ENCODE measurements at regions of chr1 and their contacts with region 1.

Region 1: GRCh38 chr1:17451731-17452130 is 12.3 kb upstream of the RCC2 start:
- DNase-seq: no peak
- ATAC-seq: no peak
- H3K4me3 ChIP-seq: no peak overlapping the region
- H3K4me3 Mint-ChIP-seq: no peak overlapping the region
- H3K27ac ChIP-seq: no peak overlapping the region
- H3K27ac Mint-ChIP-seq: no peak overlapping the region
- H3K4me1 ChIP-seq: no peaks in the 10 kb centered on the region
- H3K4me1 Mint-ChIP-seq: no peaks in the 10 kb centered on the region
- H3K27me3 ChIP-seq: no peaks in the 10 kb centered on the region
- H3K27me3 Mint-ChIP-seq: peaks cover 4% of the 10 kb centered on the region
- CTCF ChIP-seq: no peak

Region 2: GRCh38 chr1:16727190-16728111 is 724.3 kb before region 1 on chr1:
- CTCF ChIA-PET with region 1: no interaction called
- POLR2A ChIA-PET with region 1: no interaction called
- intact Hi-C with region 1: loop called in 1 of 2 experiments (anchors 10 kb)
- DNase-seq: peak in 8 of 14 experiments; percentile 12 to 64 (median 40)
- ATAC-seq: peak; percentile 44
- H3K4me3 ChIP-seq: peak overlapping the region; percentile 2
- H3K4me3 Mint-ChIP-seq: no peak overlapping the region
- H3K27ac ChIP-seq: no peak overlapping the region
- H3K27ac Mint-ChIP-seq: no peak overlapping the region
- H3K4me1 ChIP-seq: peaks cover 11% of the 10 kb centered on the region
- H3K4me1 Mint-ChIP-seq: no peaks in the 10 kb centered on the region
- H3K27me3 ChIP-seq: peaks cover 5 to 12% of the 10 kb centered on the region in 2 experiments
- H3K27me3 Mint-ChIP-seq: no peaks in the 10 kb centered on the region
- CTCF ChIP-seq: no peak

Region 3: DNA sequence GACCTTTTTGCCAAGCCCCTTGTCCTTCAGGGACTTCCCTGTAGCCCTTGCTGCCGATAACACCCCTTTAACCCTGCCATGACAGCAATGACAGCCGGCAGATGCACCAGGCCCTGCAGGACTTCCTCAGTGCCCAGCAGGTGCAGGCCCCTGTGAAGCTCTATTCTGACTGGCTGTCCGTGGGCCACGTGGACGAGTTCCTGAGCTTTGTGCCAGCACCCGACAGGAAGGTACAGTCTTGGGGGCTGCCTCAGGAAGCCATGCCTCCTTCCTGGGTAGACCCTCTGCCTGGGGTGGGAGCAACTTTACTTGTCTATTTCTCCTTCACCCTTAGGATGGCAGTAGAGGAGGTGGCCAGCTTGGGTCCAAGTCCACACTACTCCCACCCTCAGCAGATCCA is 95.8 kb before region 1 on chr1:
- CTCF ChIA-PET with region 1: no interaction called
- POLR2A ChIA-PET with region 1: no interaction called
- intact Hi-C with region 1: no loop called
- DNase-seq: peak in 6 of 14 experiments; percentile 6 to 36 (median 23)
- ATAC-seq: no peak
- H3K4me3 ChIP-seq: peak overlapping the region; percentile 35
- H3K4me3 Mint-ChIP-seq: no peak overlapping the region
- H3K27ac ChIP-seq: no peak overlapping the region
- H3K27ac Mint-ChIP-seq: no peak overlapping the region
- H3K4me1 ChIP-seq: peaks cover 10% of the 10 kb centered on the region
- H3K4me1 Mint-ChIP-seq: peaks cover 11% of the 10 kb centered on the region
- H3K27me3 ChIP-seq: no peaks in the 10 kb centered on the region
- H3K27me3 Mint-ChIP-seq: no peaks in the 10 kb centered on the region
- CTCF ChIP-seq: no peak

Region 4: DNA sequence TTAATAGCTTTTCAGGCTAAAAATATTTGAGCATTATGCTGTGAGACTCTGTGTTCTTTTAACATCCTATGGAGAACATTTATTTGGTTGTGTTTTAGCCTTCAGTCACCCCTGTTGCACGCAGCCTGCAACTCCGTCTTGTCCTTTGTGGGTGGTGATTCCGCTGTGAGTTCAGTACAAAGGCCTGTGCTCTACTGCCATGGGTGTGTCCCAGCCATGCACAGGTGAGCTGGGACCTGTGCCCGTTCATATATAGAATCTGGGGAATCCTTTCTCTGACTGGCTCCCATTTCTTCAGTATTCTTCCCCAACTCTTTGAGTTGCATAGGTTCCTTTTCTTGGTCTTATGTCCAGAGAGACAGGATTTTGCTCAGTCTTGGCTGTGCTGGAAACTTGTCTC is 364.8 kb after region 1 on chr1:
- CTCF ChIA-PET with region 1: no interaction called
- POLR2A ChIA-PET with region 1: no interaction called
- intact Hi-C with region 1: no loop called
- DNase-seq: no peak
- ATAC-seq: no peak
- H3K4me3 ChIP-seq: no peak overlapping the region
- H3K4me3 Mint-ChIP-seq: no peak overlapping the region
- H3K27ac ChIP-seq: no peak overlapping the region
- H3K27ac Mint-ChIP-seq: no peak overlapping the region
- H3K4me1 ChIP-seq: no peaks in the 10 kb centered on the region
- H3K4me1 Mint-ChIP-seq: no peaks in the 10 kb centered on the region
- H3K27me3 ChIP-seq: peaks cover 0 to 5% of the 10 kb centered on the region in 2 experiments
- H3K27me3 Mint-ChIP-seq: peaks cover 31% of the 10 kb centered on the region
- CTCF ChIP-seq: no peak

Region 5: GRCh38 chr1:17865912-17866739 is 414.4 kb after region 1 on chr1:
- CTCF ChIA-PET with region 1: no interaction called
- POLR2A ChIA-PET with region 1: no interaction called
- intact Hi-C with region 1: no loop called
- DNase-seq: no peak
- ATAC-seq: no peak
- H3K4me3 ChIP-seq: no peak overlapping the region
- H3K4me3 Mint-ChIP-seq: no peak overlapping the region
- H3K27ac ChIP-seq: no peak overlapping the region
- H3K27ac Mint-ChIP-seq: no peak overlapping the region
- H3K4me1 ChIP-seq: no peaks in the 10 kb centered on the region
- H3K4me1 Mint-ChIP-seq: no peaks in the 10 kb centered on the region
- H3K27me3 ChIP-seq: peaks cover 0 to 5% of the 10 kb centered on the region in 2 experiments
- H3K27me3 Mint-ChIP-seq: peaks cover 10% of the 10 kb centered on the region
- CTCF ChIP-seq: no peak